Endothelial cell of umbilical vein (primary cell): ENCODE measurements at regions of chr2 and their contacts with region 1.

Region 1: GRCh38 chr2:221423210-221423786 is 148.8 kb downstream of the EPHA4 start:
- DNase-seq: peak; percentile 97
- H3K4me3 ChIP-seq: peak overlapping the region in 1 of 3 experiments; percentile 1
- H3K27ac ChIP-seq: peak overlapping the region; percentile 82
- H3K4me1 ChIP-seq: peaks cover 35% of the 10 kb centered on the region
- H3K27me3 ChIP-seq: no peaks in the 10 kb centered on the region
- CTCF ChIP-seq: no peak
- POLR2A ChIP-seq: no peak

Region 2: GRCh38 chr2:221235941-221236340 is 187.4 kb before region 1 on chr2:
- CTCF ChIA-PET with region 1: interaction called, 3 read pairs
- POLR2A ChIA-PET with region 1: no interaction called
- dilution Hi-C with region 1: no loop called
- intact Hi-C with region 1: loop called (anchors 2 kb)
- DNase-seq: peak; percentile 88
- H3K4me3 ChIP-seq: peak overlapping the region in 1 of 3 experiments; percentile 21
- H3K27ac ChIP-seq: peak overlapping the region; percentile 83
- H3K4me1 ChIP-seq: peaks cover 15% of the 10 kb centered on the region
- H3K27me3 ChIP-seq: no peaks in the 10 kb centered on the region
- CTCF ChIP-seq: no peak
- POLR2A ChIP-seq: no peak

Region 3: DNA sequence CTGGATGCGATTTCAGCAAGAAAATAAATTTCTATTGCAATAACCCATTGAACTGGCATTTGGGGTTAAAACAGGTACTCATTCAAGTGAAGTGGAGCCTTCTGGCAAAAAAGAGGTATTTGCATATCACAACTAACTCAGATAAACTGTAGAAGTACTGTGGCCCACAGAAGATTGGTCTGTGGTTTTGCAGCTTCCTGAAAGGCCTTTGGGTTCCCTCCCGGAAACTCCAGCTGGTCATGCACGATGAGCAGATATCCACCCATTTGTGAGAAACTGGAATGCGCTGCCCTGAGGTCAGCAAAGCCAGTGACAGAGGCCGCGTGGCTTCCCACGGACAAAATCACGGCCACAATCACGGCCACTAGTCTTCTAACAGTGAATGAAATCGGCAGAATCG is 42.5 kb after region 1 on chr2:
- CTCF ChIA-PET with region 1: no interaction called
- POLR2A ChIA-PET with region 1: no interaction called
- dilution Hi-C with region 1: no loop called
- intact Hi-C with region 1: loop called (anchors 2 kb)
- DNase-seq: no peak
- H3K4me3 ChIP-seq: no peak overlapping the region
- H3K27ac ChIP-seq: no peak overlapping the region
- H3K4me1 ChIP-seq: peaks cover 20% of the 10 kb centered on the region
- H3K27me3 ChIP-seq: no peaks in the 10 kb centered on the region
- CTCF ChIP-seq: no peak
- POLR2A ChIP-seq: no peak

Region 4: GRCh38 chr2:221517696-221518151 is 94.4 kb after region 1 on chr2:
- CTCF ChIA-PET with region 1: no interaction called
- POLR2A ChIA-PET with region 1: no interaction called
- dilution Hi-C with region 1: no loop called
- intact Hi-C with region 1: loop called (anchors 2 kb)
- DNase-seq: peak; percentile 72
- H3K4me3 ChIP-seq: no peak overlapping the region
- H3K27ac ChIP-seq: peak overlapping the region; percentile 70
- H3K4me1 ChIP-seq: peaks cover 33% of the 10 kb centered on the region
- H3K27me3 ChIP-seq: no peaks in the 10 kb centered on the region
- CTCF ChIP-seq: no peak
- POLR2A ChIP-seq: no peak

Region 5: GRCh38 chr2:221779614-221780067 is 356.3 kb after region 1 on chr2:
- CTCF ChIA-PET with region 1: no interaction called
- POLR2A ChIA-PET with region 1: no interaction called
- dilution Hi-C with region 1: no loop called
- intact Hi-C with region 1: loop called (anchors 2 kb)
- DNase-seq: peak; percentile 91
- H3K4me3 ChIP-seq: no peak overlapping the region
- H3K27ac ChIP-seq: peak overlapping the region; percentile 86
- H3K4me1 ChIP-seq: peaks cover 23% of the 10 kb centered on the region
- H3K27me3 ChIP-seq: no peaks in the 10 kb centered on the region
- CTCF ChIP-seq: no peak
- POLR2A ChIP-seq: no peak